PC-3 (cell line): ENCODE measurements at regions of chr2 and their contacts with region 1.

Region 1: DNA sequence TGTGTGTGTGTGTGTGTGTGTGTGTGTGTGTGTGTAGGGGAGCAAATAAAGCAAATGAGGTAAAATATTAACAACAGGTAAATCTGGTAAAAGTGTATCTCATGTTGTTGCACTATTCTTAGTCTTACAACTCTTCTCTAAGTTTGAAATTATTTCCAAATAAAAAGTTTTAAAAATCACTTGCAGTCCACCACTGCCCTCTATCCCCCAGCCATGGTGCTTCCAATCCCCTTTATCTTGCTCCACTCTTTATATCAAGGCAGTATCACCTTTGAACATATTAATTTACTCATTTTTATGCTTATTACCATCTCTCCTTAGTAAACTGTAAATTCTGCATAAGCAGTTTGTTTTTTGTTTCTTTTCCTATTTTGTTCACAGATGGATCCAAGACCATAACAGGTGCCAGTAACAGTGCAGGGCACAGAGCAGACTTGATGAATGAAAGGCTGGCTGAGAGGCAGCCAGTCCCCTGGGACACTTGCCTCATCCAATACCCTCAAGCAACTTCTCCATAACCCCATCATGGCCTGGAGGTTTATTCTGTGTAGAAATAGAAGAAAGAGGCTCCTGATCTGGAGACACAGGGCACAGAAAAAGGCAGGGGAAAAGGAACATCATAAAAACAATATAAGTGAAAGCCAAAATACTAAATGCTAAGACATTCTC is 67.6 kb downstream of the LDAH start:
- DNase-seq: no peak
- ATAC-seq: no peak
- H3K4me3 ChIP-seq: no peak overlapping the region
- H3K27ac ChIP-seq: no peak overlapping the region
- H3K4me1 ChIP-seq: no peaks in the 10 kb centered on the region
- H3K27me3 ChIP-seq: peaks cover 22% of the 10 kb centered on the region
- CTCF ChIP-seq: no peak

Region 2: DNA sequence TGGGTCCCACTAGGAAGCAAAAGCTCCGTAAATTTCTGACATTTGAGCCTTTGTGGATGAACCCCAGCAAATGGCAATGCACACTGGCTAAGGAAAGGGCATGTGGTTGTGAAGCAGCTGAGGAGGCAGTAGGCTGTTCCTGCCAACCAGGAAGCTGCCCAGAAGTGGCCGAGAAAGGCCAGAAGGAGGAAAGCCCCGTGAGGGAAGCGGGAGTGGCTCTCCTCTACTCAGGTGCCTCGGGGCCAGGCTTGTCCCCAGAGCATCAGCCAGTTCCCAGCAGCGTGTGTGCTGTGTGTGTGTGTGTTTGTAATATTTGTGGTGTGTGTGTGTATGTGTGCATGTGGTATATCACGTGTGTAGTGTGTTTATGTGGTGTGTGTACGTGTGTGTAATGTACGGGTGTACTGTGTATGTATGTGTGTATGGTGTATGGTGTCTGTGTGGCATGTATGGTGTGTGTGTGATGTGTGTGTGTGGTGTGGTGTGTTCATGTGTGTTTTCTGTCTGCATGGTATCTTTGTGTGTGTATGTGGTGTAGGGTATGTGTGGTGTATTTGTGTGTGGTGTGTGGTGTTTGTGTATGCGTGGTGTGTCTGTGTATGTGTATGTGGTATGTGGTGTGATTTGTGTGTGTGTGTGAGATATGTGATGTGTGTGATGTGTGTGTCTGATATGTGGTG is 198.0 kb after region 1 on chr2:
- CTCF ChIA-PET with region 1: no interaction called
- POLR2A ChIA-PET with region 1: interaction called, 13 read pairs
- intact Hi-C with region 1: no loop called
- DNase-seq: no peak
- ATAC-seq: no peak
- H3K4me3 ChIP-seq: no peak overlapping the region
- H3K27ac ChIP-seq: no peak overlapping the region
- H3K4me1 ChIP-seq: no peaks in the 10 kb centered on the region
- H3K27me3 ChIP-seq: peaks cover 24% of the 10 kb centered on the region
- CTCF ChIP-seq: no peak